Natural killer cell (primary cell): ENCODE measurements at regions of chr5 and their contacts with region 1.

Region 1: GRCh38 chr5:83076742-83077661 is at the starts of genes TMEM167A and XRCC4:
- DNase-seq: peak; percentile 87 to 97
- ATAC-seq: peak; percentile 98 to 99 (median 98)
- H3K4me3 ChIP-seq: peak within 1 kb of the TSS; percentile 67
- H3K4me3 Mint-ChIP-seq: peak within 1 kb of the TSS; percentile 99
- H3K27ac ChIP-seq: peak within 1 kb of the TSS; percentile 80
- H3K27ac Mint-ChIP-seq: peak within 1 kb of the TSS; percentile 98 to 99
- H3K4me1 ChIP-seq: peaks cover 6% of the 10 kb centered on the region
- H3K4me1 Mint-ChIP-seq: peaks cover 55 to 59% of the 10 kb centered on the region in 2 donors
- H3K27me3 ChIP-seq: no peaks in the 10 kb centered on the region
- H3K27me3 Mint-ChIP-seq: no peaks in the 10 kb centered on the region
- CTCF ChIP-seq: no peak
- total RNA-seq, gene TMEM167A: 42.0 to 45.3 (median 44.2) TPM
- total RNA-seq, gene XRCC4: 6.0 to 8.6 (median 7.0) TPM

Region 2: GRCh38 chr5:82278095-82278918 is 798.7 kb before region 1 on chr5 and contains the start of gene RPS23:
- intact Hi-C with region 1: loop called (anchors 10 kb)
- DNase-seq: peak; percentile 77 to 94
- ATAC-seq: peak; percentile 92 to 97 (median 94)
- H3K4me3 ChIP-seq: peak within 1 kb of the TSS; percentile 84
- H3K4me3 Mint-ChIP-seq: peak within 1 kb of the TSS; percentile 95
- H3K27ac ChIP-seq: peak within 1 kb of the TSS; percentile 73
- H3K27ac Mint-ChIP-seq: peak within 1 kb of the TSS; percentile 95
- H3K4me1 ChIP-seq: peaks cover 12% of the 10 kb centered on the region
- H3K4me1 Mint-ChIP-seq: peaks cover 25 to 33% of the 10 kb centered on the region in 2 donors
- H3K27me3 ChIP-seq: no peaks in the 10 kb centered on the region
- H3K27me3 Mint-ChIP-seq: no peaks in the 10 kb centered on the region
- CTCF ChIP-seq: no peak
- total RNA-seq, gene RPS23: 1,162 to 1,462 (median 1,451) TPM

Region 3: DNA sequence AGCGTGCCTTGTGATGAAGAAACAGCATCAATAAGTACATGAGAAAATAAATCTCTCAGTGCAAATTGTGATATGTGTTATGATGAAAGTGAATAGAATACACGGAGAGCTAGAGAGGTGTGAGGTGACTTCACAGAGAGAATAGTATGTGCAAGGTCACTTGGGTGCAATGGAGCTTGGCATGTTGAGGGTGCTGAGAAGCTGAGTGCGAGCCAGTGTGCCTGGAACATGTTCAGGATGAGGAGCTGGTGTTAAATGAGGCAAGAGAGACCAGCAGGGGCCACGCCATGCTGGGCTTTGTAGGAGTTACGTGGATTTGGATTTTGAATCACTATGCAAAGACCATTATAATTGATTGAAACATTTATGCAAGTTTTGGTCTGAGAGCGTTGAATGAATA is 786.1 kb before region 1 on chr5:
- intact Hi-C with region 1: no loop called
- DNase-seq: no peak
- ATAC-seq: no peak
- H3K4me3 ChIP-seq: no peak overlapping the region
- H3K4me3 Mint-ChIP-seq: no peak overlapping the region
- H3K27ac ChIP-seq: no peak overlapping the region
- H3K27ac Mint-ChIP-seq: no peak overlapping the region
- H3K4me1 ChIP-seq: no peaks in the 10 kb centered on the region
- H3K4me1 Mint-ChIP-seq: no peaks in the 10 kb centered on the region
- H3K27me3 ChIP-seq: no peaks in the 10 kb centered on the region
- H3K27me3 Mint-ChIP-seq: no peaks in the 10 kb centered on the region
- CTCF ChIP-seq: no peak